ENCODE measurements at regions of chr11 and their contacts with region 1.

Region 1: DNA sequence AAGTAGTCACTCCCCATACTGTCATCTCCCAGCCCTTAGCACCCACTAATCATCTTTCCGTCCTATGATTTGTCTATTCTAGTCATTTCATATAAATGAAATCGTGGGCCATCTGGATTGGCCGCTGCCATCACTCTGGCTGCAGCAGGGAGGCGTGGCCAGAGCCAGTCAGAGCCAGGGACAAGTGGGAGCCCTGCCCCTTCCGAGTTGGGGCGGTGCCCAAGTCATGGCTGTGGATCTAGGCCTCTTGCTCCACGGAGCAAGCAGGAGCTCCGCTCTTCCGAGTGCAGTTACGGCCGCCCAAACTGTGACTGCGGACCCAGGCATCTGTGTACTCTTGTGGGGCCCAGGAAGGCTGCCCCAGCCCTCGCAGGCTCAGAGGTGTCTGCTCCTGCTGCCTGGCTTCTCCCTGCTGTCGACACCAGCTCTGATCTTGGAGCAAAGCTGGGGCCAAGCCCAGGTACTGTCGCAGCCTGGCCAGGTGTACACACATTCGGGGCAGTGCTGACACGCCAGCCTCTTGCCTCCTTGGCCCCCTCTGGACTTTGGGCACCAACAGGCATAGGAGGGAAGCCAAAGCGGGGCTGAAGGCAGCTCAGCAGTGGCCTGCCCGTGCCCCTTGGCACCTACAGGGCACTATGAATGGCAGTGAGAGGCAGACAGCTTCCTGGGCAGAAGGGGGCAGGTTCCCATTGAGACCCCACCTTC is 8.4 kb downstream of the MRPL48 start:
- DNase-seq: no peak
- H3K4me3 ChIP-seq: no peak overlapping the region
- H3K27ac ChIP-seq: no peak overlapping the region
- H3K4me1 ChIP-seq: peaks cover 6 to 13% of the 10 kb centered on the region in 2 donors
- H3K27me3 ChIP-seq: no peaks in the 10 kb centered on the region
- CTCF ChIP-seq: no peak
- POLR2A ChIP-seq: no peak

Region 2: DNA sequence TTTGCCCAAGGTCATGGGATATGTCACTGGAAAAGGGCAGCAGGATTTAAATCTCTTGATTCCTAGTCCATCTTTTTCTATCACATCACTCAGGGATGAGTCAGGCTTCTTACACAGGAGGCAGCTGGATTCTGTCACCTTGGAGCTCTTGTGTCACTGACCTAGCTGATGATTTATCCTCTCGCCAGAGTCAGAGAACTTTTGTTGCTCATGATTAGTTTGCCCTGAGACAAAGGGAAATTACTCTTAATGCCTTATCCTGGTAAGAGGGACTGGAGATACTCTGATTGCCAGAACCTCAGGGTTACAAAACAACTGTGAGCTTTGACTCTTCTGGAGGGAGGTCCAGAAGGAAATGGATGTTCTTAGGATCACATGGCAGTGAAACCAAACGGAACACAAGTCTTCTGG is 70.5 kb after region 1 on chr11:
- intact Hi-C with region 1: loop called in 1 of 2 experiments (anchors 10 kb)
- DNase-seq: peak; percentile 65 to 92 (median 83)
- H3K4me3 ChIP-seq: no peak overlapping the region
- H3K27ac ChIP-seq: peak overlapping the region; percentile 47 to 84 (median 72)
- H3K4me1 ChIP-seq: peaks cover 9 to 36% of the 10 kb centered on the region in 2 donors
- H3K27me3 ChIP-seq: no peaks in the 10 kb centered on the region
- CTCF ChIP-seq: no peak
- POLR2A ChIP-seq: peak in 1 of 2 donors; percentile 53

Region 3: DNA sequence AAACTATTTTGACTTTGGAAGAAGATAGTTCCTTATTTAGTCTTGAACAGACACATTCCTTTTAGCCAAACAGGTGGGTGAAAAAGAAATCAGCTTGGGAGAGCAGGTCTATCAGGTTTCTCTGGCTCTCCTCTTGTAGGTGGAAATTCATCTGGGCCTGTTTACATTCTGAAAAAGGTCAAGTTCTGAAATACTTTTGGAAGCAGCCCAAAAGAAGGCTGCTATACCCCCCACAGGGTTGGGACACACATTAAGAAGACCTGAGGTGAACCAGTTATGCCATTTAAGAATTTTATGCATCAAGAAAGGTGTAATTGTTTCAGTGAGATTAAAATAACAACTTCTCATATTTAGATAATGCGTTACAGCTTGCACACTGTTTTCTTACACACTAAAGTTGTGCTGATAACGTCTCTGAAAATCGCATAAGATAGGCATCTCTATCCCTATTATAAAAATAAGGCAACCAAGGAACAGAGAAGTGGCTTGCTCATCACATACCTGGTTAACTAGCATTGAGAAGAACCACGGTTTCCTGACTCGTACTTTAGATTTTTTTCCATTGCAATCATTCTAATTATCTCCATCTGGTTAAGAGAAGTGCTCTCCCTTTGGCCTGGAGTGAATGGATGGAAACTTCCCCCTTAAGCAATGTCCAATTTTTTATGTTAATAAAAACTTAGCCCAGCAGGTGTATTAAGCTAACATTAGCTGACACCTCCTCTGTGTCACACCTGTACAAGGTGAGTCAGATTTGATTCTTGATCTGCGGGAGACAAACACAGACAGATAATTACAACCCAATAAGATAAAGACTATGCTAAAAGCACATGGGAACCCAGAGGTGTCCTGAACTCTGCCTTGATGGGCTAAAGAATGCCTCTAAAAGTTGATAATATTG is 273.3 kb after region 1 on chr11:
- intact Hi-C with region 1: no loop called
- DNase-seq: no peak
- H3K4me3 ChIP-seq: no peak overlapping the region
- H3K27ac ChIP-seq: no peak overlapping the region
- H3K4me1 ChIP-seq: peaks cover 0 to 19% of the 10 kb centered on the region in 2 donors
- H3K27me3 ChIP-seq: no peaks in the 10 kb centered on the region
- CTCF ChIP-seq: no peak
- POLR2A ChIP-seq: no peak